ENCODE measurements at regions of chr9 and their contacts with region 1.

Region 1: GRCh38 chr9:2132484-2133082 is 117.4 kb downstream of the SMARCA2 start:
- DNase-seq: no peak
- ATAC-seq: peak; percentile 60

Region 2: DNA sequence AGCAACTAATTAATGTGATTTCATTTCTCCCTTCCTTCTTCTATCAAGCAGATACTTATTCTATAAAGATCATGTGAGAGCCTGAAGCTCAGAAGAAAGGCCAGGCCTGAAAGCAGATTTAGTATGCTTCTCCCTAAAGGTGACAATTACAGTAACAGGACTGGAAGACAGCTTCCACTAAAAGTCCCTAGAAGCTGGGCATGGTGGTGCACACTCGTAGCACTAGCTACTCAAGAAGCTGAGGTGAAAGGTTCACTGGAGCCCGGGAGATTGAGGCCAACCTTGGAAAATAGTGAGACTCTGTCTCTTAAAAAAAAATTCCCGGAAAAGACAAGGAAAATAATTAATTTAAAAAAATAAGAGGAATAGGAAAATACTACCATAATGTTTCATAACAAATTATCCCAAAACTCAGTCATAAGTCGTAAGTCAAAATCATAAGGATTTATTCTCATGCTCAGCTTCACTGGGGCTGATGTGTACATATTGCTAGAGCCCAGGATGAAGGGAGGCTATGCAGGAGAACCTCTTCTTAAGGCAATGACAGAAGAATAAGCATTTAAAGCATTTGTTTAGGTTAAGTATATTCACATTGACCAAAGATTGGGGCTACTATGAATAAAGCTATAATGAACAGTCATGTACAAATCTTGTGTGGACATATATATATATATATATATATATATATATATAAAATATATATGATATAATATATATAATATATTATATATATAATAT is 328.3 kb before region 1 on chr9:
- intact Hi-C with region 1: no loop called
- DNase-seq: no peak
- ATAC-seq: no peak

Region 3: GRCh38 chr9:2809691-2810433 is 677.3 kb after region 1 on chr9:
- intact Hi-C with region 1: loop called (anchors 10 kb)
- DNase-seq: no peak
- ATAC-seq: peak; percentile 86

Region 4: GRCh38 chr9:2837915-2838314 is 705.3 kb after region 1 on chr9:
- intact Hi-C with region 1: loop called (anchors 10 kb)
- DNase-seq: no peak
- ATAC-seq: peak; percentile 74

Measured in Right ventricle myocardium superior (tissue), 1 donor.